CD8-positive, alpha-beta memory T cell (primary cell): ENCODE measurements at regions of chr1 and their contacts with region 1.

Region 1: GRCh38 chr1:34742667-34743270 is 12.1 kb upstream of the GJB5 start:
- DNase-seq: peak; percentile 45 to 73 (median 59)
- H3K4me3 ChIP-seq: no peak overlapping the region
- H3K4me3 Mint-ChIP-seq: no peak overlapping the region
- H3K27ac ChIP-seq: no peak overlapping the region
- H3K27ac Mint-ChIP-seq: no peak overlapping the region
- H3K4me1 ChIP-seq: no peaks in the 10 kb centered on the region
- H3K4me1 Mint-ChIP-seq: peaks cover 0 to 6% (median 4%) of the 10 kb centered on the region in 3 donors
- H3K27me3 ChIP-seq: no peaks in the 10 kb centered on the region
- H3K27me3 Mint-ChIP-seq: peaks cover 13 to 14% of the 10 kb centered on the region in 2 donors

Region 2: GRCh38 chr1:33633019-33633801 is 1109.6 kb before region 1 on chr1:
- CTCF ChIA-PET with region 1: interaction called, 21 read pairs
- POLR2A ChIA-PET with region 1: no interaction called
- DNase-seq: peak; percentile 58 to 83 (median 67)
- H3K4me3 ChIP-seq: no peak overlapping the region
- H3K4me3 Mint-ChIP-seq: peak overlapping the region in 1 of 7 donors; percentile 12
- H3K27ac ChIP-seq: no peak overlapping the region
- H3K27ac Mint-ChIP-seq: no peak overlapping the region
- H3K4me1 ChIP-seq: no peaks in the 10 kb centered on the region
- H3K4me1 Mint-ChIP-seq: peaks cover 0 to 4% (median 2%) of the 10 kb centered on the region in 3 donors
- H3K27me3 ChIP-seq: no peaks in the 10 kb centered on the region
- H3K27me3 Mint-ChIP-seq: peaks cover 8 to 42% of the 10 kb centered on the region in 2 donors

Region 3: DNA sequence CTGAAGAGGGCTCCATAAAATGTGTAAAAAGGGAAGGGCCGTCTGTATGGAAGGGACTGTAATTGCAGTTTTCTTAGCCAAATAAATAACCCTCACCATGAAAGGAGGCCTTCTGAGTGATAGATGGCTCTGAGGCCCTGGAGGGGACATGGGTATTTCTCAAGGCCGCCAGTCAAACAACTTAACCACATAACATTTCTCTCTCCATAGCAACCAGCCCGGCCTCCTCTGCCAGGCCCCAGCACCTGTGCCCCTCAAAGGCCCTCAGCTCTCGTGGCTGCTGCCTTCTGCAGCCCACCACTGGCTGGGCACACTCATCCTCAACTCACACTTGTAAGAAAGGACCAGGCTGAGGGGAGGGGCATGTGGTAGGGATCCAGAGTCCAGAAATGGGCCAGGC is 45.0 kb before region 1 on chr1:
- CTCF ChIA-PET with region 1: no interaction called
- POLR2A ChIA-PET with region 1: no interaction called
- DNase-seq: no peak
- H3K4me3 ChIP-seq: no peak overlapping the region
- H3K4me3 Mint-ChIP-seq: no peak overlapping the region
- H3K27ac ChIP-seq: no peak overlapping the region
- H3K27ac Mint-ChIP-seq: no peak overlapping the region
- H3K4me1 ChIP-seq: no peaks in the 10 kb centered on the region
- H3K4me1 Mint-ChIP-seq: no peaks in the 10 kb centered on the region
- H3K27me3 ChIP-seq: no peaks in the 10 kb centered on the region
- H3K27me3 Mint-ChIP-seq: peaks cover 8 to 30% of the 10 kb centered on the region in 2 donors

Region 4: GRCh38 chr1:34758751-34759150 is 16.0 kb after region 1 on chr1:
- CTCF ChIA-PET with region 1: interaction called, 10 read pairs
- POLR2A ChIA-PET with region 1: no interaction called
- DNase-seq: no peak
- H3K4me3 ChIP-seq: no peak overlapping the region
- H3K4me3 Mint-ChIP-seq: no peak overlapping the region
- H3K27ac ChIP-seq: no peak overlapping the region
- H3K27ac Mint-ChIP-seq: peak overlapping the region in 1 of 8 donors; percentile 23
- H3K4me1 ChIP-seq: no peaks in the 10 kb centered on the region
- H3K4me1 Mint-ChIP-seq: no peaks in the 10 kb centered on the region
- H3K27me3 ChIP-seq: no peaks in the 10 kb centered on the region
- H3K27me3 Mint-ChIP-seq: peaks cover 4 to 36% of the 10 kb centered on the region in 2 donors